Colonic mucosa (tissue), 4 donors: ENCODE measurements at regions of chr10 and their contacts with region 1.

Region 1: DNA sequence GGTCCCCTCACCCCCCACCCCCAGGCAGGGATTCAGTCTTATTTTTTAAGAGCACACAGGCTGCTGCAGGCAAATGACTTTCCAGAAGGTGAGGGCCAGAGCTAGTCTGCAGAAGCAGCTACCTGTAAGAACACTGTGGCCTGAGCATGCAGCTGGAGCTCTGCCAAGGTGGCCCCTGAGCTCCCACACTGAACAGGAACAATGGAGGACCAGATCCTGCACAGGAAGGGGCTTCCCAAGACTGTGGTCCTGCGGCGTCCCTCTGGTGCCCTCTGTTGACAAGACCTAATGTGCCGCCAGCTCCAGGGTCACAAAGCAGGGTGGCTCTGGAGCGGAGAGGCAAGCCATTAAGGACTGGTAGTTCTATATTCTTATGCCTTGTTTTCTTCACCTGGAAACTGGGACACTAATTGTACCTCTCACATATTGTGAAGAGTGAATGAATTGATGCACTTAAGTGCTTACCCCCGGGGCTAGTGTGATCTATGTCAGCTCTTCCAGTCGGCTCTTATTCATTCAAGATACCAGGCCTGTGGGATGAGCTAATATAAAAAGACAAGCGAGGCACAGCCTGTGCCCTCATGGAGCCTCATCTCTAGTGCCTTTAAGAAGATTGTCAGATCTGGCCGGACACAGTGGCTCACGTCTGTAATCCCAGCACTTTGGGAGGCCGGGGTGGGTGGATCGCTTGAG is 8.0 kb upstream of the BEND7 start:
- DNase-seq: peak; percentile 51
- H3K4me3 ChIP-seq: no peak overlapping the region
- H3K27ac ChIP-seq: no peak overlapping the region
- H3K4me1 ChIP-seq: no peaks in the 10 kb centered on the region
- H3K27me3 ChIP-seq: no peaks in the 10 kb centered on the region
- CTCF ChIP-seq: peak; percentile 52

Region 2: DNA sequence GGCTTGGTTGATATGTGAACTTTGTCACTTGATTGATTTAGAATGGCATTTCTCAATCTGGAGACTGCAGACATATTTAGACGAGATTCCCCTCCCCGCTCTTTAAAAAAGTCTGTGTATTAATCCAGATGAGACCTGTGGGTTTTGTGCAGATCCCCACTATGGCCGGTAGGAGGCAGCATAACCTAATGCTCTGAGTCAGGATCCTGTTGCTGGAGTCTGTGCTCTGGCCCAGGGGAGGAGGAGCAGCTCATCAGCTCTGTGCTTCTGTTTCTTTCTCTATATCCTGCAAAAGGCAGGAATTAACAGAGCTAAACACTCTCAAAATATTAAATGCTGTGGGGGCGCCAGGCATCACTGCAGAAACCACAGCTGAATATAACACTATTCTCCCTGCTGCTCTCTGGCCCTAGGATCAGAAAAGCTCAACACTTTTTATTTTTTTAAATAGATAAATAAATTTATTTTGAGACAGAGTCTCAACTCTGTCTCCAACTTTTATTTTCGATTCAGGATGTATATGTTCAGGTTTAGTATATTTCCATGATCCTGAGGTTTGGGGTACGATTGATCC is 164.8 kb before region 1 on chr10:
- intact Hi-C with region 1: loop called (anchors 5 kb)
- DNase-seq: peak; percentile 79
- H3K4me3 ChIP-seq: no peak overlapping the region
- H3K27ac ChIP-seq: no peak overlapping the region
- H3K4me1 ChIP-seq: no peaks in the 10 kb centered on the region
- H3K27me3 ChIP-seq: no peaks in the 10 kb centered on the region
- CTCF ChIP-seq: peak; percentile 91

Region 3: DNA sequence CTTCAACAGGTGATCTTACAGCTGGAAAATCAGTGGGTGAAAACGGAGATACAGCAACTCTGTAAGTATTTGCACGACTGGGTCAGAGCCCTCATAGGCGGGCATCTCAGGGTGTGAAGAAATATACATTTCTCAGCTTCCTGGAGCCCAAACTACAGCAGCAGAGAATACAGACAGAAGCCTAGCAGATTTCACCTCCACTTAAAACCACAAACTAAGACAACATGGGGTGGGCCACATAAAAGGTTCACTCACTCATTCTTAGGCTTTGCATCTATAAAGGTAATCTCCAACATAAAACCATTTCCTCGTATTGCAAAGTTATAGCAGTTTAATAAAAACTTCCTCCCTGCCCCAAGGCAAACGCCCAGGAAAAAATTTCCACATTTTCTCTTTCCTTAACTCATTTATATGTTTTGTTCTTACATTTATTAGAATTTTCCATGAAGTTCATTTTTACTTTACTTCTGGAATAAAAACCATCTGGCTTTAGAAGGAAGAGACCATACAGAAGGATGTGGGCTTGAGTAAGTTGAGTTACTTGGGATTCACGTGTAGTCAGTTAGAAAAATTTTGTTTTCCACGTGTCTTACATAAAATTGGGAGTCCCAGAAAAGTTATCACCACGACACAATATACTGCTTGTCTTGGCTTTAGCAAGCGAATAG is 466.8 kb after region 1 on chr10:
- intact Hi-C with region 1: no loop called
- DNase-seq: no peak
- H3K4me3 ChIP-seq: no peak overlapping the region
- H3K27ac ChIP-seq: no peak overlapping the region
- H3K4me1 ChIP-seq: no peaks in the 10 kb centered on the region
- H3K27me3 ChIP-seq: no peaks in the 10 kb centered on the region
- CTCF ChIP-seq: no peak